Right cardiac atrium (tissue), 5 donors: ENCODE measurements at regions of chr15 and their contacts with region 1.

Region 1: GRCh38 chr15:96330450-96331145 is at the start of gene NR2F2:
- DNase-seq: peak; percentile 97 to 100 (median 99)
- ATAC-seq: peak; percentile 84 to 86
- H3K4me3 ChIP-seq: peak within 1 kb of the TSS; percentile 96
- H3K27ac ChIP-seq: peak within 1 kb of the TSS; percentile 98
- H3K4me1 ChIP-seq: no peaks in the 10 kb centered on the region
- H3K27me3 ChIP-seq: no peaks in the 10 kb centered on the region
- total RNA-seq, gene NR2F2: 44.3 to 68.6 (median 54.8) TPM

Region 2: GRCh38 chr15:95259513-95259912 is 1071.1 kb before region 1 on chr15:
- intact Hi-C with region 1: loop called in 1 of 4 experiments (anchors 5 kb)
- DNase-seq: peak; percentile 62 to 73 (median 66)
- ATAC-seq: peak; percentile 85 to 88
- H3K4me3 ChIP-seq: no peak overlapping the region
- H3K27ac ChIP-seq: peak overlapping the region; percentile 17
- H3K4me1 ChIP-seq: peaks cover 8% of the 10 kb centered on the region
- H3K27me3 ChIP-seq: no peaks in the 10 kb centered on the region

Region 3: DNA sequence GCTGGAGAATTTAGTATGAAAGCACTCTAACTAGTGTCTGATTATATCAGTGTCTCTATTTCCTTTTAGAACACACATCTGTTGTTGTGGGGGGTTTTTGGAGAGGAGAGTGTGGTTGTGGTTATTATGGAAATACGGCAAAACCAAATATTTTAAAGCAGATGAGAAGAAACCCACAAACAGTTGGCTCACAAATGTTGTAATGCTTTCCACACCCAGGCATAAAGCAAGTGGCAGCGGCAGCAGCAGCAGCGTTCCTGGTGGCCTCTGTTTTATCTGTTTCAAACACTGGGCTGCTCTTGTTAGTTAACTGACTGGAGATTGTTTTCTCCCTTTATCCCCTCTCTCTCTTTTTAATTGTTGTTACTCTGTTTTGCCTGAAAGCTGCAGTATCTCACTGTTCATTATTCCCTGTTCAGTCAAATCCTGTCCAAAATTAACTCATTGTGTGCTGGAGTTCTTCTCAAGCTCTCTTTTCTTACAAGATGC is 1045.6 kb before region 1 on chr15:
- intact Hi-C with region 1: loop called in 1 of 4 experiments (anchors 10 kb)
- DNase-seq: no peak
- ATAC-seq: peak; percentile 40 to 68
- H3K4me3 ChIP-seq: no peak overlapping the region
- H3K27ac ChIP-seq: no peak overlapping the region
- H3K4me1 ChIP-seq: no peaks in the 10 kb centered on the region
- H3K27me3 ChIP-seq: no peaks in the 10 kb centered on the region

Region 4: DNA sequence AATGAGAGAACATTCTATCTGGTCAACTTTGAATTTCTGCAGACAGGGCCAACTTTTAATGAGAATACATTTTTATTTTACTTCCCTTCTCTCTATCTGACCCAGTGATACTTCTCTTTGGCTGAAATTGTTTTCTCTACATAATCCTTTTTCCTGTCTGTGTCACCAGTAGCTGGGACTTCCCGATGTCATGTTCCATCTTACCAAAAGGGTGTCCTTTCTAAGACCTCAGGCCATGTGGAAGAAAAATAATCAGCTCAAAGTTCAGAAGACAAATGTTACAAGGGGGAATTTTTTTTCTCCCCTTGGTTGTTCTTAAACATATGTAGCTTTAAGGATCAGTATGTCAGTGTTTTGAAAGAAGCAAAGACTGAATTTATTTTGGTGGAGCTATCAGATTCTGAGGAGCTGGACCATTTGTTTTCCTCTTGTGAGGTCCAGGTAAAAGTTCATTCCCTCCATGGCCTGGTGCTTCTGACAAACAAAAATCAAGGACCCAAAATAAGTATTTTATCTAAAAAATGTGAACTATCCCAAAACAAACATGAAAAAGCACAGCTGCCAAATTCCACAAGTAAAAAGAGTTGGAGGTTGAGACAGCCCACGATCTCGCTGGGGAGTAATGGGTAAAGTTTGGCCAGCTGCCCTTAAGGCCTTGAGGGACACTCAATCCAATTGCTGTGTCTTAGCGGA is 859.5 kb before region 1 on chr15:
- intact Hi-C with region 1: loop called in 2 of 4 experiments (anchors 10 kb)
- DNase-seq: peak; percentile 44 to 78 (median 67)
- ATAC-seq: peak; percentile 74 to 81
- H3K4me3 ChIP-seq: no peak overlapping the region
- H3K27ac ChIP-seq: peak overlapping the region; percentile 5
- H3K4me1 ChIP-seq: peaks cover 3% of the 10 kb centered on the region
- H3K27me3 ChIP-seq: no peaks in the 10 kb centered on the region

Region 5: DNA sequence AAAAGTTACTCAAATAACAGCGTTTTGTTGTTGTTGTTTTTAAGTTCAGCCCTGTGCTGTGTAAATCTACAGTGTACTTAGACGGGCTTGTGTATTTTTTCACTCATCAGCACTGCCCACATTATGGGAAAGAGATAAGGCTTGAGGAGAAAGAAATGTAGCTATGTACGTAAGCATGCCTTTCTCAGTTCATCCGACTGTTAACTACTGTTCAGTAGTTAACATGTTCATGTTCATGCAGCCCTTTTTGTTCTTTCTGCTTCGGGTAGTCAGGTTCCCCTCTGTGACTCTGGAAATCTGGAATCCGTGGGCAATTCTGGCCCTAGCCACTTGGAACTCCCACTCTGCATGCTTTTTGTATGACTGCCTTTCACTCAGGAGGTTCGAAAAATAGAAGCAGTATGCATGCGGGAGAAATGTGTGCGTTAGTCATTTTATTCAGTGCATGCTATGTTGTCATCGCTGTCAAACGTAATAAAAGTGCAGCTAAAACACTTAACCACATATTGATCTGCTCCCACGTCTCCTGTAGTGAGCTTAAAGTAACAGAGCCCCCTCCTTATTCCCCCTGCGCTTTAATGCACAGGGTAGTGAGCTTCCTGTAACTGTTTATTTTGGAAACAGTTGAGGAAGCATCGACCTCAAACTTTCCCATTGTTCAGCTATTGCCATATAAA is 283.2 kb before region 1 on chr15:
- intact Hi-C with region 1: loop called in 3 of 4 experiments (anchors 5 to 10 kb)
- DNase-seq: no peak
- ATAC-seq: peak; percentile 55 to 70
- H3K4me3 ChIP-seq: peak overlapping the region; percentile 23
- H3K27ac ChIP-seq: peak overlapping the region; percentile 20
- H3K4me1 ChIP-seq: no peaks in the 10 kb centered on the region
- H3K27me3 ChIP-seq: no peaks in the 10 kb centered on the region

Region 6: DNA sequence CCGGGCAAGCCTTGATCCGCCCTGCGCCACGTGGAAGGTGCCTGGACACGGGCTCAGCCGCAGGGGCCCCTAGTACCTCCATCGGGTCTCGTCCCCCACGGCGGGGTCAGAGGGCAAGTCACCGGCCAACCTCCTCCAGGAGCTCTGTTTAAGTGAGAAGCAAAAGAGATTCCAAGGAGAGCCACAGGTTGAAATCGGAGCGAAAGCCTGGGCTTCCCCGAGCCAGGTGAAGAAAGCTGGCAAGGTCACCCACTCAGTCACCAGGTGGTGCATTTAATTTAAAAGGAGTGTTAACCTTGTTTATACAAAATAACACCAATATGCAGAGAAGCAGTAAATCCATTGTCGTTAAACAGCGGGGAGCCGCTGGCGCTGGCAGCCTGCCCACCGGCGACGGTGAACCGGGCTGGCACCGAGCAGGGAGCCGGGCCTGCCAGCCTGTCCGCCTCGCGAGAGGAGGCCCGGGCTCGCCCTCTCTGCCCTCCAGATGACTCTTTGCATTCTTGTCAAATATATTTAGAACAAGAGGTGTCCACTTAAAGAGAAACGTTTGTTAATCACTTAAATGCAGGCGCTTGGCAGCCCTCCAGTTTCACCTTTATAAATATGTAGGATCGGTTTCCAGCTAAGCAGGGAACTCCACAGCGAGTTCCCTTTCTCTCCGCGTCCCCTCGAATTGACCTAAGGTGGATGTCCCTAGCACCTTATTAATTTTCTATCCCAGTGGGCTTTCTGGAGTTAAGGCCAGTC is 277.4 kb before region 1 on chr15:
- intact Hi-C with region 1: loop called in 3 of 4 experiments (anchors 5 to 10 kb)
- DNase-seq: peak; percentile 45 to 87 (median 82)
- ATAC-seq: peak; percentile 89 to 92
- H3K4me3 ChIP-seq: peak overlapping the region; percentile 6
- H3K27ac ChIP-seq: peak overlapping the region; percentile 88
- H3K4me1 ChIP-seq: no peaks in the 10 kb centered on the region
- H3K27me3 ChIP-seq: no peaks in the 10 kb centered on the region

Region 7: DNA sequence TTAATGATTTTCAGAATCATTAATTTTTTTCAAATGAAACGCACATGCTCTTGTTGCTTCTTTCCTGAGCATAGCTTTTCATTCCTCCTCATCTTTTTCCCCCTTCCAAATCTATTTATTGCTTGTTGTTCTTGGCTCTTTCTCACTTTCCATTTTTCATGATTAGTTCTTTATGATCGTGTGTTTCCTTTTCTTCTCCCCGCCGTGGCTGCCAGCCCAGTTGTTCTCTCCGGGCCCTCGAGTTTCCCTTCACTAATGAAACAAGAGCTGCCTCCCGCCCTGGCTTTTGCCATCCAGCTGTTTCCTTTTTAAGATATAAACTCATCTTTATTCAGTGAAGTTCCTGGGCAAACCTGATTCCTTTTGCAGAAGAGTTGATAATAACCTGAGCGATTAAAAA is 170.3 kb before region 1 on chr15:
- intact Hi-C with region 1: loop called in 1 of 4 experiments (anchors 10 kb)
- DNase-seq: peak; percentile 59 to 87 (median 83)
- ATAC-seq: peak; percentile 49 to 76
- H3K4me3 ChIP-seq: no peak overlapping the region
- H3K27ac ChIP-seq: no peak overlapping the region
- H3K4me1 ChIP-seq: peaks cover 1% of the 10 kb centered on the region
- H3K27me3 ChIP-seq: no peaks in the 10 kb centered on the region

Region 8: GRCh38 chr15:96254168-96254567 is 76.4 kb before region 1 on chr15:
- intact Hi-C with region 1: no loop called
- DNase-seq: no peak
- ATAC-seq: no peak
- H3K4me3 ChIP-seq: no peak overlapping the region
- H3K27ac ChIP-seq: no peak overlapping the region
- H3K4me1 ChIP-seq: no peaks in the 10 kb centered on the region
- H3K27me3 ChIP-seq: no peaks in the 10 kb centered on the region